ENCODE measurements at regions of chr14 and their contacts with region 1.

Region 1: DNA sequence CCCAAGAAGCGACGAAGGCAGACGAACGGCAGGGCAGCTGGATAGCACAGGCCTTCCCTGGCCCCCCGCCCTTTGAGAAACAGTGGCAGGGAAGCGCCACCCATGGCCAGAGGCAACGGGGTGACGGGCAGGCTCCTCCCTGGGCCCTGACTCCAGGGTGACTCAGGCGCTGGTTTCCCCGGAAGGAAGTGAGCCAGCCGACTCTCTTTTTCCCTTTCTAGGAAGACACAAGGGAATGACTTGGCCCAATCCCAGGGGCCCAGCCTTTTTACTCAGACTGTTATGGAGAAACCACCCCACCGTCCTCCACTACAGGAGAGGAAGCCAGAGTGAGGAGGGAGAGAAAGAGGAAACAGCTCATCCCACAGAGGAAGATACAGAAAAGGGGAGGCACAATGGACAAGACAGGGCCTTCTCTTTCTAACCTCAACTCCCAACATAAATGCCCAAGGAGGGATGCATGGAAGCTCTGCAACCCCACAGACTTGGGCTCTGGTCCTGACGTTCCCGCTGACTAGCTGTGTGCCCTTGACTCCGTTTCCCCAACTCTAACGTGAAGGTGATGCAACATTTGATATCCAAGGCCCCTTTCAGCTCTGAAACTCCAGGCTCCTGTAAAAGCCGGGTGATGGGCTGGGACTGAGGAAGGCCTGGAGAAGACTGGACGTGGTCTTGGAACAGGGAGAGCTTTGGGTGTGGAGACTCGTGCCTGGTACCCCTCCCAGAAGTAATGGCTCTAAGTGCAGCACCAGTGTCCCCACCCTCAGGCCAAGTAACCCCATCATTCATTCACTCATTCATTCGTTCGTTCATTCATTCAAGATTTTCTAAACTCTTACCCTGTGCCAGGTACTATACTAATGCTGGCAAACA is 27.8 kb downstream of the ACTN1 start:
- DNase-seq: peak; percentile 100
- ATAC-seq: peak; percentile 91
- H3K4me3 ChIP-seq: peak overlapping the region; percentile 42
- H3K27ac ChIP-seq: peak overlapping the region; percentile 84
- H3K4me1 ChIP-seq: peaks cover 45% of the 10 kb centered on the region
- H3K27me3 ChIP-seq: no peaks in the 10 kb centered on the region
- CTCF ChIP-seq: no peak

Region 2: GRCh38 chr14:69079183-69079742 is 128.0 kb after region 1 on chr14:
- CTCF ChIA-PET with region 1: no interaction called
- POLR2A ChIA-PET with region 1: no interaction called
- intact Hi-C with region 1: loop called (anchors 1 kb)
- DNase-seq: peak; percentile 95
- ATAC-seq: peak; percentile 80
- H3K4me3 ChIP-seq: peak overlapping the region; percentile 50
- H3K27ac ChIP-seq: peak overlapping the region; percentile 94
- H3K4me1 ChIP-seq: peaks cover 52% of the 10 kb centered on the region
- H3K27me3 ChIP-seq: no peaks in the 10 kb centered on the region
- CTCF ChIP-seq: no peak

Region 3: GRCh38 chr14:69101331-69101826 is 150.1 kb after region 1 on chr14:
- CTCF ChIA-PET with region 1: no interaction called
- POLR2A ChIA-PET with region 1: interaction called, 15 read pairs
- intact Hi-C with region 1: no loop called
- DNase-seq: peak; percentile 81
- ATAC-seq: peak; percentile 86
- H3K4me3 ChIP-seq: no peak overlapping the region
- H3K27ac ChIP-seq: 0 out of 2 replicates have a peak overlapping the region, but pooled peaks have one; percentile 5
- H3K4me1 ChIP-seq: peaks cover 4% of the 10 kb centered on the region; the same call in 1 of the 2 replicates
- H3K27me3 ChIP-seq: no peaks in the 10 kb centered on the region
- CTCF ChIP-seq: peak; percentile 92

Region 4: DNA sequence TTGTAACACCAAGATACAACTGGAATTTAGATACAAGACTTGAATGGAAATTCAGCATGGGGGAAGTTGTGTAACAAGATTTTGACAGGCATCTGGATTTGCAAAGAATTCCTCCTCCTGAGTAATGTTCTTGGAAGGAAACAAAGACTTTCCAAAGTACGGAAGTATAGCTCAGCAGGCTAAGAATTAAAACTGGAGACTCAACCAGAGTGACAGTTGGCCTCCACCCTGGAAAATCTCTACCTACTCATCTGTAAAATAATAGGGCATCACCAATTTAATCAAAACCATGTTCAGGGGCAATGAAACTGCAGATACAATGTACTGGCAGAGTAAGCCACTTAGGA is 186.9 kb after region 1 on chr14:
- CTCF ChIA-PET with region 1: no interaction called
- POLR2A ChIA-PET with region 1: no interaction called
- intact Hi-C with region 1: no loop called
- DNase-seq: no peak
- ATAC-seq: no peak
- H3K4me3 ChIP-seq: no peak overlapping the region
- H3K27ac ChIP-seq: no peak overlapping the region
- H3K4me1 ChIP-seq: peaks cover 23% of the 10 kb centered on the region
- H3K27me3 ChIP-seq: no peaks in the 10 kb centered on the region
- CTCF ChIP-seq: no peak

Measured in PC-3 (cell line).